ENCODE measurements at regions of chr3 and their contacts with region 1.

Region 1: GRCh38 chr3:120095226-120095978 is 1.2 kb upstream of the GSK3B start:
- DNase-seq: peak; percentile 93

Region 2: GRCh38 chr3:119891944-119892721 is 203.3 kb before region 1 on chr3:
- intact Hi-C with region 1: loop called (anchors 5 kb)
- DNase-seq: no peak

Region 3: GRCh38 chr3:119912220-119912619 is 183.2 kb before region 1 on chr3:
- intact Hi-C with region 1: loop called (anchors 5 kb)
- DNase-seq: no peak

Region 4: DNA sequence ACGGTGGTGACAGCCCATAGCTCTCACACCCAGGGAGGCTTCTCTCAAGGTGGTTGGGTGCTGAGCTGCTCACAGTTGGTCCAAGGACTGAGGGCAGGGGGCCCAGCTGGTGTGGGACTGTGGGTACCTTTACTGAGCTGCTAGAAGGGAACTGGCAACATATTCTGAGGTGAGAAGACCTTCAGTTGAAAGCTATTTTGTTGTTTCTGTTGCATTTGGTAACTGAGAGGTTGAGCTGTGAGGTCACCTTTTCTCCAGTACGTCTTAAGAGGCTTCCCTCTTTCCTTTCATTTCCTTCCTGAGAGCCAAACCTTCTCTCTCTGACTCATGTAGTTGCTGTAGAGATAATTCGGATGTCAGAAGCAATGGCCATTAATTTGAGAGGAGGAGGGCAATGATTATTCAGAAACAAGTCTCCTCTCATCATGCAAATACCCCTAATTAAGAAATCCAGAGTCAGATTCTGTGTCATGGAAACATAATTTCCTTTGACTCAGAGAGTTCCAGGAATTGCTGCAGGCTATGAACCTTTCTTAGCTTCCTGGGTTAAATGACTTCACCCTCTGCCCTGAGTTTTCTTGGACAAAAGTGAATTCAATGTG is 57.8 kb after region 1 on chr3:
- intact Hi-C with region 1: loop called (anchors 2 kb)
- DNase-seq: no peak

Region 5: GRCh38 chr3:120348981-120349818 is 253.8 kb after region 1 on chr3 and contains the start of gene LRRC58:
- intact Hi-C with region 1: loop called (anchors 5 kb)
- DNase-seq: peak; percentile 93
- total RNA-seq, gene LRRC58: 8.1 TPM

Region 6: DNA sequence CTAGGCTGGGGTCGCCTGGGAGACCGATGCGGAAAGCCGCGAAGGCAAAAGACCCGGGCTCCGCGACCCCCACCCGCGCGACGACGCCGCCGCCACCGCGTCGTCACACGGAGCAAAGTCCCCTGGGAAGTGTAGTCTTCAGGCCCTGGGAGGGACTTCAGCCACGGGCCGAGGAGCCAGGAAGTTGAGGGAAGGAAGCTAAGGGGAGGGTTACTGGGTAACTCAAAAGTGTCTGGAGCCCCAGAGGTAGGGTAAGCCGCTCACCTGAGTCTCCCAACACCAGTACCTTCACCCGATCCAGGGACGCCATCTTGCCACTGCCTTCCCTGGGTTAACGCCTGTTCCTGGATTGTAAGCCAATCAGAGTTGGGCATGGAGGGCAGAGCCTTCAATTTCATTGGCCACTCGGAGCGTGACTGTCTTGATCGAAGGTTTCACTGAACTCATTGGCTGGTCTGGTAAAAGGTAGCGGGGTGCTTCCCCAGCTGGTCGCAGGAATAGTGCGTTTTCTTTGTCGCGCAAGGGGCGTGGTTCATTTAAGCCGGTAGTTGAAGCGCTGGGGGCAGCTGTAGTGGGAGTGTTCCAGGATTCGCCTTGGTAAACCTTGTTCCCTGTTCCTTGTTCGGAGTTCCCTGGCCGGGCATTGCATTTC is 646.9 kb after region 1 on chr3 and contains the starts of genes GTF2E1 and RABL3:
- intact Hi-C with region 1: loop called (anchors 10 kb)
- DNase-seq: peak; percentile 98
- total RNA-seq, gene GTF2E1: 13.2 TPM
- total RNA-seq, gene RABL3: 22.8 TPM